Posterior vena cava (tissue), 2 donors: ENCODE measurements at regions of chr11 and their contacts with region 1.

Region 1: DNA sequence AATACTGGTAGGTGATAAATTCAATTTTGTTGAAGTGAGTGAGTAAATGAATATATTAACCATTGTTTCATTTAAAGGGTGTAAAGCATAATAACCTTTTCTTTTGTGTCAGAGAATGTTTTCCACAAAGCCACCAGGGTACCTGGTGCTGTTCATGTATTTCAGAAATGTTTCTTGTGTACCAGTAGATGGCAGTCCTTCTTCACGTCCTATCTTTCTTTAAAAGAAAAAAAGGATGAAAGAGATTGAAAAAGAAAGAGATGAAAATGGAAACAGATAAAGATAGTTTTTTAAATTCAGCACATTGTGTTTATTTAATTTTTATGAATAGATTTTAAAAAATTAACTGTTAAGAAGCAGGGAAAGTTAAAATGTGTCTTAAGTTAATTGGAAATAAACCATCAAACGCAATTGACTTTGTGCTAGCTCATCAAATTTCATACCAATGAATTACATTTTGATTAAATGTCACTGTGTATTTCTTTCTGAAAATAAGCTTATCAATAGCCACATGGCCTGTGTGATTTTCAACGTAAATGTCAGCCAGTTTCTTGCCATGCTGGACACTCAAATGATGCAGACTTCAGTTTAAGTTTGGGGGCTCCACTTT is 65.5 kb upstream of the CHORDC1 start:
- DNase-seq: no peak

Region 2: GRCh38 chr11:90204832-90205646 is 83.3 kb before region 1 on chr11:
- intact Hi-C with region 1: no loop called
- DNase-seq: no peak

Region 3: DNA sequence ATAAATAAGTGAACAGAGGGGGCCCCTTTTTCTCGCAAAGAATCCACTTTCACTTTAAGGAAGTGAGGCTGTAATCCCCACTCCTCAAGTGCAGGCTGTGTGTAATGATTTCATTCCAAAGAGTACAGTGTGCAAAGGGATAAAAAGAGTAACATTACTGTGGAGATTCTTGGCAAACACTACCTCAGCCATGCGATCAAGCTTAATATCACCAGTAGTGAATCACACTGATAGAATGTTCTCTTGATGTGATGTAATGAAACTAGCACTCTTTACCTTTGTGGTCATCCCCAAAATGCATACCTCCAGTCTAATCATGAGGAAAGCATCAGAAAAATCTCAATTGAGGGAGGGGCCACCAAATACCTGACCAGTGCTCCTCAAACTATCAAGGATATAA is 180.6 kb after region 1 on chr11:
- intact Hi-C with region 1: loop called in 1 of 2 experiments (anchors 5 kb)
- DNase-seq: no peak